ENCODE measurements at regions of chr19 and their contacts with region 1.

Region 1: DNA sequence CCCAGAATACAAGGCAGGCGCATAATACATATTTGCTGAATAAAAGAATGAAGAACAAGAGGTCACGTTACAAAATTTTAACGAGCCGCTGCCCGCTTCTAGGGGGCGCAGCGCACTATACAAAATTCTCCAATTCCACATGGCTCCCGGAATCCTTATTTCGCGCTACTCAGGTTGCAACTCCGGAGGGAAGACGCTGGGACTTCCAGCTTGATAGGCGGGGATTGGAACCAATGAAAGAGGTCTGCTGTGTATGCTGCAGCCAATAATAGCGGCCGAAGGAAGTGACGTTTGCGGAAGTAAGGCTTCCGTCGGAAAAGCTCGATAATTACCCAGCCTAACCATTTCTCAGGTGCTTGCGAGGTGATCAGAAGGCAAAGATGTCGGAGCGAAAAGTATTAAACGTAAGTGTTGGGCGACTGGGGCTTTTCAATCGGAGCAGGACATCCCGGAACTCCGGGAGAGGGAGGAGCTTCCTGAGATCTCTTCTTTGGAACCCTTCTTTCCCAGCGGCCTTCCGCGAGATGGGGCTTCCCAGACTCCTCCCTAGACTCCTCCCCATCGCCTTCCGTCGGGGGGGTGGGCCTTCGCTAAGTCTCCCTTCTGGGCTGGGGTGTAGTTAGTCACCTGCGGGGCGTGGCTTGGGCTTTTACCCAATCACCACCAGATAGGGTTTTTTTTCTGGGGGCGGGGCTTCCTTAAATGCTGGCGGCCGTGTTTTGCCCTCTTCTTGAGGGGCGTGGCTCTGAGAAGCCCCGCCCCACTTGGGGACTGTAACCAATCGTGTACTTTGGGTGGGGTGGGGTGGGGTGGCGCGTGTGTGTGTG is at the start of gene YJU2:
- DNase-seq: peak; percentile 100

Region 2: GRCh38 chr19:4186087-4186993 is 60.6 kb before region 1 on chr19:
- CTCF ChIA-PET with region 1: no interaction called
- POLR2A ChIA-PET with region 1: no interaction called
- DNase-seq: peak; percentile 83

Region 3: GRCh38 chr19:4197625-4198466 is 49.1 kb before region 1 on chr19:
- CTCF ChIA-PET with region 1: no interaction called
- POLR2A ChIA-PET with region 1: no interaction called
- DNase-seq: peak; percentile 67

Region 4: GRCh38 chr19:4208385-4209094 is 38.4 kb before region 1 on chr19:
- CTCF ChIA-PET with region 1: no interaction called
- POLR2A ChIA-PET with region 1: no interaction called
- DNase-seq: no peak

Region 5: DNA sequence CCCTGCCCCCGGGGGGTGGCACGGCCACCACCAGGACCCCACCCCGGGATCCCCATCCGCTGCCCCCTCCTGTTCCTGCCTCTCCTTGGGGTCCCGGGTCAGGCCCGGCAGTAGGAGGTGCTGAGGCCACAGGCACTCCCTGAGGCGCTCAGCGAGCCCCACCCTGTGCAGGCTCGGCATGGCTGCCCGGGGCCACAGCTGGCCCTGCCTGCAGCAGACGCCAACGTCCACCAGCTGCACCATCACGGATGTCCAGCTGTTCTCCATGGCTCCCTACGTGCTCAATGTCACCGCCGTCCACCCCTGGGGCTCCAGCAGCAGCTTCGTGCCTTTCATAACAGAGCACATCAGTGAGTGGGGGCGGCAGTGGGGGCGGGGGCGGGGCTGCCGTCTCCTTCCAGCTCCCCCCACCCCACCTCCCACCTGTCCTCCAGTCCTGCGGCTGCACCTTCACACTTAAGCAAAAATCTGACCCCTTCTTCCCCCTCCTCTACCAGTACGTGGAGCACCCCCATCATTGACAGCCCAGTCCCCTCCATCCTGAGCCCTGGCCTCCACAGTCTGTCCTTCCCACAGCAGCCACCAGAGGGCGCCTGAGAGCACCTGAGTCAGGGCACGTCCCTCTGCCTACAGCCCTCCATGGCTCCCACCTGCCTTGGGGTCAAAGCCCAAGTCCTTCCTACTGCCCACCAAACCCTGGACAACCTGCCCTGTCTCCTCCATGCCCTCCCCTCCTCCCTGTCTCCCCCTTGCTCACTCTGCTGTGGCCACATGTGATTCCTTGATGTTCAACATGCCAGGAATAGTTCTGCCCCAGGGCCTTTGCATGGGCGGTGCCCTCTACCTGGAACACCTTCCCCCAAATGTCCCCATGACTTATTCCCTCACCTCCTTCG is 13.8 kb before region 1 on chr19:
- CTCF ChIA-PET with region 1: interaction called, 5 read pairs
- POLR2A ChIA-PET with region 1: interaction called, 20 read pairs
- DNase-seq: peak; percentile 70